Transverse colon (tissue), 4 donors: ENCODE measurements at regions of chr15 and their contacts with region 1.

Region 1: GRCh38 chr15:55526559-55527036 is 18.6 kb upstream of the DNAAF4 start:
- DNase-seq: no peak
- H3K4me3 ChIP-seq: no peak overlapping the region
- H3K27ac ChIP-seq: no peak overlapping the region
- H3K4me1 ChIP-seq: no peaks in the 10 kb centered on the region
- H3K27me3 ChIP-seq: no peaks in the 10 kb centered on the region
- CTCF ChIP-seq: peak; percentile 35 to 55 (median 48)
- EP300 ChIP-seq: no peak
- POLR2A ChIP-seq: no peak

Region 2: DNA sequence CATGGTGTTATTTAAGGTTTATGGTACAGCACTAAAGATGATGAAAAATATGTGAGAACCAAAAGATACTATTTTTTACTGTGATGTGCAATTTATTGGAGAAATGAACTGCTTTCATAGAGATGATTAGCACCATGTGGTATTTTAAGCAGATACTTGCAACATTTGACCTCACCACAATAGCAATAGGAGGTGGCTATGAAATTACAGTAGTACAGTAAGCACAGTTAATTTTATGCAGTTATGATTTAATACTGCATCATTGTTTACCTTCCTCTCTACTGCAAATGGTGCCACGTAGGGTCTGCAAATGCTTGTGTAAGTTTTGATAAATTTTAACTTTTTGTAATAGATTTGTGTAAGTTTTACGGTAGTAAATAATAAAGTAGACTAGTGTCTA is 47.5 kb after region 1 on chr15:
- in situ Hi-C with region 1: no loop called
- intact Hi-C with region 1: no loop called
- DNase-seq: no peak
- H3K4me3 ChIP-seq: no peak overlapping the region
- H3K27ac ChIP-seq: no peak overlapping the region
- H3K4me1 ChIP-seq: no peaks in the 10 kb centered on the region
- H3K27me3 ChIP-seq: no peaks in the 10 kb centered on the region
- CTCF ChIP-seq: no peak
- EP300 ChIP-seq: no peak
- POLR2A ChIP-seq: no peak

Region 3: DNA sequence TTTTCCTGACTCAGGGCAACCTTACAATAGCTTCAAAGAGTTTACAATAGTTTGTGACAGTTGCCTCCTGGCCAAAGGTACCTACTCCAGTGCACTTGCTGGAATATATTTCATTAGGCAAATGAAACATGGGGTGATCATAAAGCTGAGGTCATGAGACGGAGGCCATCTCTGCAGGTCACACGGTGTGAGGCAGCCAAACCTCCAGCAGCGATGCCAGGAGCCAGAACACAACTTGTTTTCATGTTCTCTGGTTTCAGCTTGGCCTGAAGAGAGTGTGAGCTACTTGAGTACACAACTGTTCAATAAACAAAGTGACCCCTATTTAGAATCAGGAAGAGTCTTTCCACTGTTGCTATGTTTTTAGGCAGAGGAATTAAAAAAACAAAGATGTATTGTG is 104.3 kb after region 1 on chr15:
- in situ Hi-C with region 1: loop called in 1 of 4 experiments (anchors 10 kb)
- intact Hi-C with region 1: loop called (anchors 5 kb)
- DNase-seq: no peak
- H3K4me3 ChIP-seq: no peak overlapping the region
- H3K27ac ChIP-seq: no peak overlapping the region
- H3K4me1 ChIP-seq: no peaks in the 10 kb centered on the region
- H3K27me3 ChIP-seq: no peaks in the 10 kb centered on the region
- CTCF ChIP-seq: no peak
- EP300 ChIP-seq: no peak
- POLR2A ChIP-seq: no peak

Region 4: DNA sequence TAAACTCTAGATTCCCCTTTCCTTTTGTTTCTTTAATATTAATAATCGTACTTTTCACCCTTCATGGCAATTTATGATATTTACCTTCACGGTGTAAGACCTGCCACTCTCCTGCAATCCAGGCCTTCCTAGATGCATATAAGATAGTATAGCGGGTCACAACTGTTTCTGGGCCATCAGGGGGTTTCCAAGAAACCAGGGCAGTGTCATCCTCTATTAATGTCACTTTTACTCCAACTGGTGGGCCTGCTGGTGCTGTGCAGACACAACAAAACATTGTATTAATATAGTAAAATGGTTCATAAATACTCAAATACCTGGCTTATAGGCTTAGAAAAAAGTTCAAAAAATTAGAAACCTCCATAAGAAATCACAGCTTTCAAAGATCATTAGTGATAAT is 110.5 kb after region 1 on chr15:
- in situ Hi-C with region 1: loop called in 2 of 4 experiments (anchors 10 kb)
- intact Hi-C with region 1: loop called (anchors 5 kb)
- DNase-seq: no peak
- H3K4me3 ChIP-seq: no peak overlapping the region
- H3K27ac ChIP-seq: no peak overlapping the region
- H3K4me1 ChIP-seq: no peaks in the 10 kb centered on the region
- H3K27me3 ChIP-seq: no peaks in the 10 kb centered on the region
- CTCF ChIP-seq: no peak
- EP300 ChIP-seq: no peak
- POLR2A ChIP-seq: no peak

Region 5: GRCh38 chr15:55649054-55649423 is 122.4 kb after region 1 on chr15:
- in situ Hi-C with region 1: loop called in 1 of 4 experiments (anchors 10 kb)
- intact Hi-C with region 1: no loop called
- DNase-seq: no peak
- H3K4me3 ChIP-seq: no peak overlapping the region
- H3K27ac ChIP-seq: no peak overlapping the region
- H3K4me1 ChIP-seq: no peaks in the 10 kb centered on the region
- H3K27me3 ChIP-seq: no peaks in the 10 kb centered on the region
- CTCF ChIP-seq: no peak
- EP300 ChIP-seq: no peak
- POLR2A ChIP-seq: no peak